H1 (cell line): ENCODE measurements at regions of chr19 and their contacts with region 1.

Region 1: DNA sequence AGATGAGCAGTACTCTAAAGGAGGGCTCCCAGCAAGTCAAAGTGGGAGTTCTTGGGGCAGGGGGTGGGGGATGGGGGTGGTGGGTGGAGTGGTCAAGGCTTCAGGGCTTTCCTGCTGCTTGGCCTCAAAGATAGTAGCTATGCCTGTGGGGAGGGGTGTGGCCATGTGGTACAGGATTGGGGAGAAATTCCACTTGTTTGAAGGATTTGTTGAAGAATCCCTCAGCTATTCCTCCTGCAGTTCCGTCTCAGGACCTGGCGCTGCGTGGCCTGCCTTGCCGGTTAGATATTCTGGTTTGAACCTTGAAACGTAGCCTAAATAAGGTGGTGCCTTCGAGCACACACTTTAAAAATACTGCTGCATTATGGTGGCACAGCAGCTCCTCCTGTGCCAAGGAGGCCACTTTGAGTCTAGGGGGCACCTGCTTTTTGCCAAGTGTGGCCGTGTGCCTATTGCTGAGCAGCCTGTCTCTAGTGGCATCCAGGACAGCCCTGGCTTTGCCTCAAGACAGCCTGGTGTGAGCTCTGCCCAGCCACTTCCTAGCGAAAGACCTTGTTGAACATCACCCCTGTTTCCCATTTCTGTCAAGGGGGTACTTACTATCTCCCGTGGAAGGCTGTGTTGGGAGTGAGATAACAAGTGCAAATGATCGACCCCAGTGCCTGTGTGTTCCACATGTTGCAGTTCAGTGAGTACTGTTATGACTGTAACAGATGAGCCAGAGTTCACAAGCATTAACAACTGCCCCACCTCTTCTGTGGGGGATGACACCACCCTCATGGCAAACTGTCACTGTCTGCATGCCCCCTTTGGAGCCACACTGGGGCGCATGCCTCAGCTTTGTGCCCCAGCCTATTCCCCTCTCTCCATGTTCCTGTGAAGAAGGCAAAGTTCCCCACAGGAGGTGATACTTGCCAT is 5.1 kb downstream of the GATAD2A start:
- DNase-seq: no peak
- H3K4me3 ChIP-seq: no peak overlapping the region
- H3K27ac ChIP-seq: no peak overlapping the region
- H3K4me1 ChIP-seq: peaks cover 10 to 27% (median 20%) of the 10 kb centered on the region in 4 experiments; a peak in 6 of 7 replicates
- H3K27me3 ChIP-seq: no peaks in the 10 kb centered on the region
- CTCF ChIP-seq: peak; percentile 2 to 35 (median 26); a peak in 2 of 4 replicates
- EP300 ChIP-seq: no peak
- POLR2A ChIP-seq: no peak
- RAD21 ChIP-seq: no peak; a peak in 1 of 4 replicates

Region 2: DNA sequence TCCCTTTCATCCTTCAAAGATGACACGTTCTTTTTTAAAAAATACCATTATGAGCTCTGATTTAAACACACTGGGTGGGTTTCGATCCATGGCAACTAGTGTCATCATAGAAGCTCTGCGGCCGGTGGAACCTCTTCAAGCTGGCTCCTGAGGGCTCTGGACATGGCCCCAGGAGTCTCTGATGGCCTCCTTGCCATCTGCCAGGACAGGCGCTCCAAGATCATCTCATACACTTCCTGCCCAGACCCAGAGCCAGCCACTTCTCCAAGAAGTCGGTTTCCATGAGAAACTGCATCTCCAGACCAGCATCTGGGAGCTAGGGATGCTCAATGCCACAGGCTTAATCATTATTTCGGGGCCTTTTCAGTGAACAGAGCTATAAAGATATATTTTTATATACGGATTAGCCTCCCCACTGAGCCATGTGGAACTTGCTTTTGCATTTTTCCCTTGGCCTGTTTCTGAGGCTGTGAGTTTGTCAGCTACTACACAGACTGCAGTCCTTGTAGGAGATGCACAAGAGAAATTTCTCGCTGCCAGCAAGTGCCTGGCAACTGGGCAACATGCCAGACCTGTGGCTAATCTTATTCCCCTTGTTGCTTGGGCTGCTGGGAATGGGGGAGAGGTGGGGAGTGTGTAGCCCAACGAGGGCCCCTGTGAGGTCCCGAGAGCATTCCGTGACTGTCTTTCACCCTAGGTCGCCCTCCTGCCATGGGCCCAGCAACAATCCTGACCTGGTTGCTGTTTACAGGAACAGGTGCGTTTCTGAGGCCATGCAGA is 106.2 kb before region 1 on chr19:
- CTCF ChIA-PET with region 1: no interaction called
- POLR2A ChIA-PET with region 1: no interaction called
- DNase-seq: no peak
- H3K4me3 ChIP-seq: no peak overlapping the region
- H3K27ac ChIP-seq: no peak overlapping the region
- H3K4me1 ChIP-seq: no peaks in the 10 kb centered on the region
- H3K27me3 ChIP-seq: no peaks in the 10 kb centered on the region
- CTCF ChIP-seq: no peak
- EP300 ChIP-seq: no peak
- POLR2A ChIP-seq: no peak
- RAD21 ChIP-seq: no peak

Region 3: DNA sequence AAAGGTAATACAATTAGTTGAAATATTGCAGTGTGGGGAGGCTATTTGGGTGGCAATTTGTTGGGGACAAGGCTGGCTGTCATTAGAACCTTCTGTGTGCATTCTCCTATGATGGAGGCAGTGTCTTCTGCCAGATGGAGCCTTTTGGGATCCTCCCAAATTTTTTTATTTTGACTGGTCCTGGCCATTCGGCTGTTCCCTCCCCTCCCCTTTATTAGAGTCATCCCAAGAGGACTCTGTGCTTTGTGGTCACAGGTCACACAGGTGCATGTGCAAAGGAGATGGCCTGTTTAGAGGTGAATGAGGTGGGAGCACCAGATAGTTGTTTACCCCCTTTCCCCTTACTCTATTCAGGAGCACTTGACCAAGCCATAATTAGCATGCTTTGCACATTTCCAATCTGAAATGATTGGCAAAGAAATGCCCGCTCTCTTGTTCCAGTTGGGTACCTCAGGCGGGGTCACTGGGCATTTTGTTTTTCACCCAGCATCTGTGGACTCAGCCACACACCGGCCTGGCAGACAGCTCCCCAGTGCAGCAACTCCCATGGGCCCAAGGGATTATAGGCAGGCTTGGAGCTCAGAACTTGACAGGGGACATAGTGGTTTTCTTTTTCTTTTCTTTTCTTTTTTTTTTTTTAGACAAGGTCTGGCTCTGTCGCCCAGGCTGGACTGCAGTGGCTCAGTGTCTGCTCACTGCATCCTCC is 14.8 kb after region 1 on chr19:
- CTCF ChIA-PET with region 1: interaction called, 3 read pairs
- POLR2A ChIA-PET with region 1: interaction called, 12 read pairs
- DNase-seq: no peak
- H3K4me3 ChIP-seq: no peak overlapping the region
- H3K27ac ChIP-seq: no peak overlapping the region
- H3K4me1 ChIP-seq: peaks cover 0 to 7% (median 2%) of the 10 kb centered on the region in 4 experiments; a peak in 3 of 7 replicates
- H3K27me3 ChIP-seq: no peaks in the 10 kb centered on the region; a peak in 1 of 7 replicates
- CTCF ChIP-seq: no peak
- EP300 ChIP-seq: no peak
- POLR2A ChIP-seq: no peak
- RAD21 ChIP-seq: no peak